ENCODE measurements at regions of chr18 and their contacts with region 1.

Region 1: GRCh38 chr18:58195278-58195765 is 151.3 kb downstream of the NEDD4L start:
- DNase-seq: peak; percentile 64
- H3K4me3 ChIP-seq: peak overlapping the region; percentile 11 to 41 (median 22)
- H3K27ac ChIP-seq: peak overlapping the region; percentile 70 to 82 (median 76)
- H3K4me1 ChIP-seq: peaks cover 6 to 38% (median 26%) of the 10 kb centered on the region in 4 donors
- H3K27me3 ChIP-seq: no peaks in the 10 kb centered on the region
- CTCF ChIP-seq: no peak
- EP300 ChIP-seq: no peak
- POLR2A ChIP-seq: peak; percentile 30

Region 2: DNA sequence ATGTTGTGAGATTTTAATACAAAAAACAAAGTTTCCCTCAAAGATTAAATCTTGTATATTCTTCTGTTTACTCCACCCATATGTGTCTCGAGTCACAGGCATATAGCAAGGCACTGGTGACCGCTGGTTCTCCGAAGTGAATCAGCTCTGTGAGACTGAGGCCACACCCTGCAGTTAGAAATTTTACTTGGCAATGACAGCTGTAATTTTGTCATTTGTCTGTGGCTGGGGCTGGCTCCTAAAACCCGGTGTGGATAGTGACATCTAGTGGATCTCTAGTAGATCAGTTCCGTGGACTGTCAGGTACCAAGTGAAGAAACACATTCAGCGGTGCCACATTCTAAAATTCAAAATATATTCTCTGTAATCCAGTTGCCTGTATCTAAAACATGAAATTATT is 126.7 kb after region 1 on chr18:
- in situ Hi-C with region 1: no loop called
- intact Hi-C with region 1: loop called (anchors 5 kb)
- DNase-seq: peak; percentile 74
- H3K4me3 ChIP-seq: no peak overlapping the region
- H3K27ac ChIP-seq: peak overlapping the region; percentile 46 to 68 (median 53)
- H3K4me1 ChIP-seq: peaks cover 7 to 38% (median 11%) of the 10 kb centered on the region in 4 donors
- H3K27me3 ChIP-seq: no peaks in the 10 kb centered on the region
- CTCF ChIP-seq: peak; percentile 26 to 64 (median 44)
- EP300 ChIP-seq: no peak
- POLR2A ChIP-seq: no peak